ENCODE measurements at regions of chr2 and their contacts with region 1.

Region 1: GRCh38 chr2:176174824-176175708 is 13.4 kb upstream of the HOXD1 start:
- DNase-seq: no peak
- H3K4me3 ChIP-seq: no peak overlapping the region
- H3K27ac ChIP-seq: no peak overlapping the region
- H3K4me1 ChIP-seq: peaks cover 0 to 18% (median 10%) of the 10 kb centered on the region in 4 experiments
- H3K27me3 ChIP-seq: peaks cover 40 to 100% (median 73%) of the 10 kb centered on the region in 5 experiments

Region 2: DNA sequence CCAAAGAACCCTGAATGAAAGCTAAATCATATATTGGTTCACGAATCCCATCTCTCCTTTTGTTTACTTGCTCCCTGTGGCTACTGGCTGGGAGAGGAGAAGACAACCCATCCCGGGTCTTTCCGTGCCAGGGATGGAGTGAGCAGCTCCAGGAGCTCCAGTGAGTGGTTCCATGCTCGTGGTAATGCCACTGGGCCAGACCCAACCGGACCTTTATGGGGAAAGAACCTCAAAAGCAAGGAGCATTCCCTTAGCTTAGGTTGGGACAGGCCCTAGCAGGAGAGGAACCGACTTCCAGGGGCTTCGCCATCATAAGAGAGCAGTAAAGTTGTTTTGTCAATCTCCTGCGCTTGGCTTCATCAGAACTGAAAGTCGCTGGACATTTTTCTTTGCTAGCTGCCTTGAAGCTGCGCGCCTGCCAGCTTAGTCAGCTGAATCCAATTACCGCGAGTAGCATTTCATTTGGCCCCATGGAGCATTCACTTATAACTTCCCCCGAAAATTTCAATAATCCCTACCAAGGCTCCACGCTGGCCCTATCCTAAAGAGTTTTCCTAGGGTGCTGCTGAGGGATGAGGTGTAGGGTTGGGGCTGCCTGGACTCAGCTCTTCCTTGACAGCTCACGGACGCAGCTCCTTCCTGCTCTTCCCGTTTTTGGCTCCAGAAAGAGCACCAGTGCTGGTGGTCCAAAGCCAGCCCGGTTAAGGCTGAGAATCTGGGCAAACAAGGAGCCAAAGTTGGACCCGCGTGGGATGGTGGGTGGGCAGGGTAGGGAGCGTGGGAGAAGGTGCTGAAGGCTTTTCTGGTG is 13.0 kb before region 1 on chr2:
- CTCF ChIA-PET with region 1: interaction called, 14 read pairs
- POLR2A ChIA-PET with region 1: no interaction called
- DNase-seq: no peak
- H3K4me3 ChIP-seq: no peak overlapping the region
- H3K27ac ChIP-seq: no peak overlapping the region
- H3K4me1 ChIP-seq: peaks cover 0 to 18% (median 16%) of the 10 kb centered on the region in 4 experiments
- H3K27me3 ChIP-seq: peaks cover 14 to 100% (median 74%) of the 10 kb centered on the region in 5 experiments

Measured in common myeloid progenitor, CD34-positive (primary cell).